Activated CD4-positive, alpha-beta T cell treated with anti-CD3 and anti-CD28 coated beads, Interleukin-2, amount 10 ng/mL, durations not matched to agents 7 days and 5 days (primary cell): ENCODE measurements at regions of chr2 and their contacts with region 1.

Region 1: GRCh38 chr2:203718087-203718486 is 11.6 kb downstream of the CD28 start:
- DNase-seq: peak; percentile 79
- H3K4me3 Mint-ChIP-seq: peak overlapping the region; percentile 65
- H3K27ac Mint-ChIP-seq: peak overlapping the region; percentile 91
- H3K4me1 Mint-ChIP-seq: peaks cover 98% of the 10 kb centered on the region
- H3K27me3 Mint-ChIP-seq: no peaks in the 10 kb centered on the region

Region 2: DNA sequence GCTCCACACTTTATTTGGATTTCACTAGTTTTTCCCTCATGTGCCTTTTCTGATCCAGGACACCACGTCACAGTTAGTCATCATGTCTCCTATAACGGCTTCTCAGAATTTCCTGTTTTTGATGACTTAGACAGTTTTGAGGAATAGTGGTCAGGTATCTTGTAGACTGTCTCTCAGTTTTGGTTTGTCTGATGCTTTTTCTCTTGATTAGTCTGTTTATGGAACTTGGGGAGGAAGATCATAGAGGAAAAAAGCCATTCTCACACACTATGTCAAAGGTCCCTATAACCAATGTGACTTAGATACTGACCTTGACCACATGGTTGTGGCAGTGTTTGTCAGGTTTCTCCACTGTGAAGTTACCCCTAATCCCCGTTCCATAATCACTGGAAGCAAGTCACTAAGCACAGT is 272.0 kb before region 1 on chr2:
- CTCF ChIA-PET with region 1: no interaction called
- POLR2A ChIA-PET with region 1: no interaction called
- DNase-seq: no peak
- H3K4me3 Mint-ChIP-seq: no peak overlapping the region
- H3K27ac Mint-ChIP-seq: no peak overlapping the region
- H3K4me1 Mint-ChIP-seq: peaks cover 11% of the 10 kb centered on the region
- H3K27me3 Mint-ChIP-seq: no peaks in the 10 kb centered on the region

Region 3: GRCh38 chr2:203706403-203706802 is 11.7 kb before region 1 on chr2 and contains the start of gene CD28:
- CTCF ChIA-PET with region 1: interaction called, 51 read pairs
- POLR2A ChIA-PET with region 1: interaction called, 4 read pairs
- DNase-seq: peak; percentile 95
- H3K4me3 Mint-ChIP-seq: peak within 1 kb of the TSS; percentile 92
- H3K27ac Mint-ChIP-seq: peak within 1 kb of the TSS; percentile 99
- H3K4me1 Mint-ChIP-seq: peaks cover 41% of the 10 kb centered on the region
- H3K27me3 Mint-ChIP-seq: no peaks in the 10 kb centered on the region
- total RNA-seq, gene CD28: 151 to 163 TPM

Region 4: GRCh38 chr2:203730076-203730729 is 12.1 kb after region 1 on chr2:
- CTCF ChIA-PET with region 1: interaction called, 52 read pairs
- POLR2A ChIA-PET with region 1: interaction called, 14 read pairs
- DNase-seq: no peak
- H3K4me3 Mint-ChIP-seq: peak overlapping the region; percentile 43
- H3K27ac Mint-ChIP-seq: peak overlapping the region; percentile 86
- H3K4me1 Mint-ChIP-seq: peaks cover 91% of the 10 kb centered on the region
- H3K27me3 Mint-ChIP-seq: no peaks in the 10 kb centered on the region